Caco-2 (cell line): ENCODE measurements at regions of chr7 and their contacts with region 1.

Region 1: DNA sequence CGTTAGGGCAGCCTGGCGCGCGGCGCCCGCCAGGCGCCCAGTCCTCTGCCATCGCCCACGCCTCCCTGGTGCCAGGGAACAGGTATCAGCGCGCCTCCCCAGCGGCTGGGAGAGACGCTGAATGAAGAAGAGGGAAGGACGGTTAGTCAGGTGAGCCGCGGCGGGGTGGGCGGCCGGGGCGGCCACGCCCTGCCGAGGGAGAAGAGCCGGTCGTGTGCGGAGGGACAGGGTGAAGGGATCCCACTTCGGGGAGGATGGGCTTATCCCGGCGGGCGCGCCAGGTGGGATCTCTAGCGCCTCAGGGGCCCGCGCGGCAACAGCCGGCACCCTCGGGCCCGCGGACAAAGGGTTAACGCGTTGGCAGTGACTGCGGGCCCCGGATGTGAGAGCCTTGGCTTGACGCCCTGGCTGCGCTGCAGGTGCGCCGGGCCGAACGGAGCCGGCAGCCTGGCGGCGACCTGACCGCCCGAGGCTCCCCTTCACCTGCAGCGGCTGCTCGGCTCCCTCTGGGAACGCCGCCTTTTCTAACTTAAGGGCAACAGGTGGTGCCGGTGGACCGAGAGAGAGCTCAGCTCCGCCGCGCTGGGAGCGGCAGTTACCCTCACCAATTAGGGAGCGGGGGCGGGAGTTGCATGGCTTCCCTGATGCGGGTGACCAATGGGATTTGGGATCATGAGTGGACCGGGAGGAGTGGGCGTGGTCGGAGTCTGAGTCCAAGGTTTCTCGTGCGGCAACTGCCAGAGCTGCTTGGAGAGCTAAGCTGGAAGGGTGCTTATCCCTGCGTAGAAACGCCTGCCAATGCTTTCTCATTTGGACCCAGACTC is at the start of gene ARL4A:
- DNase-seq: peak; percentile 99
- H3K4me3 ChIP-seq: peak within 1 kb of the TSS; percentile 83
- H3K4me3 Mint-ChIP-seq: peak within 1 kb of the TSS; percentile 93
- H3K27ac Mint-ChIP-seq: peak within 1 kb of the TSS; percentile 89
- H3K4me1 ChIP-seq: peaks cover 7% of the 10 kb centered on the region
- H3K4me1 Mint-ChIP-seq: peaks cover 19% of the 10 kb centered on the region
- H3K27me3 ChIP-seq: no peaks in the 10 kb centered on the region
- H3K27me3 Mint-ChIP-seq: no peaks in the 10 kb centered on the region
- CTCF ChIP-seq: peak in 1 of 2 experiments; percentile 61
- total RNA-seq, gene ARL4A: 40.6 and 42.5 TPM in 2 replicates

Region 2: DNA sequence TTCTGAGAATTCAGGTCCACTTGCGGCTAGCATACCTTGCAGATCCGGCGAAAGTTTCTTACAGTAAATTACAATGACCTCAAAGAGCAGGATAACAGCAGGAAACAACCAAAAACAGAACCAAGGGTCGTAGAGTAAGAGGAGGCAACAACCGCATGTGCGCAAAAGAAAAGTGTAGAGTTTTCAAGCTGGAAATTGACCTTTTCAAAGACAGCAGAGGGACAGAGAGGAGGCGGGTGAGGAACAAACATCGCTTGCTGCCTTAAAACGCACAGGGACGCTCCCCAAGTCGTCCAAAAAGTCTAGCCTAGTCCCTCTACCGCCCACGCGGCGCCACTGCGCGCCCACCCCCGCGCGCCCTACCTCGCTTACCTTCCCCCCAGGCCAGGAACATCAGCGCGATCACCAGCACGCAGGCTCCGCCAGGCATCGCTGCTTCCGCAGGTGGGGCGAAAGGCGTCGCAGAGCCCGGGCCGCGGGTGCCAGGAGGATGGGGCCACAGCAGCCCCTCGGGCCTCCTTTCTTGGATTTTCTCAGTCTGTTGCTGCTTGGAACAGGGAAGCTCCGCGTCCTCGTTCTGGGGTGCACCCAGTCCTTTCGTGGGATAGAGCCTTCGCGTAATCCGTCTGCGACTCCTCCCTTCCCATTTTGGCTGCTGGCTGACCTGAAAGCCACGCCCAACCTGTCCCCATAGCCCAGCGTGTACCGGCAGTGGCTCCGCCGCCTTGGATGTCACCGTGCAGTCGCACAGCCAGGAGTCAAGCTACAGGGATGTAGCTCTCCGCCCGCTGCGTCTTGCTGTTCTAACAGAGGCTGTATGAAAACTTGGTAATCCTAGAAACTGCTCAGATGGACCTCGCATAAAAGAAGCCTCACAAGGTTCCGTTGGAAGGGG is 283.6 kb before region 1 on chr7 and contains the start of gene VWDE:
- CTCF ChIA-PET with region 1: no interaction called
- POLR2A ChIA-PET with region 1: no interaction called
- intact Hi-C with region 1: no loop called
- DNase-seq: peak; percentile 69 to 74
- H3K4me3 ChIP-seq: peak within 1 kb of the TSS; percentile 48
- H3K4me3 Mint-ChIP-seq: peak within 1 kb of the TSS; percentile 87
- H3K27ac Mint-ChIP-seq: peak within 1 kb of the TSS; percentile 81
- H3K4me1 ChIP-seq: no peaks in the 10 kb centered on the region
- H3K4me1 Mint-ChIP-seq: no peaks in the 10 kb centered on the region
- H3K27me3 ChIP-seq: peaks cover 1% of the 10 kb centered on the region; the same call in 1 of the 2 replicates
- H3K27me3 Mint-ChIP-seq: peaks cover 24% of the 10 kb centered on the region
- CTCF ChIP-seq: no peak
- total RNA-seq, gene VWDE: 0.46 and 0.70 TPM in 2 replicates

Region 3: GRCh38 chr7:12643644-12644043 is 43.5 kb before region 1 on chr7:
- CTCF ChIA-PET with region 1: interaction called, 6 read pairs
- POLR2A ChIA-PET with region 1: no interaction called
- intact Hi-C with region 1: loop called (anchors 1 kb)
- DNase-seq: no peak
- H3K4me3 ChIP-seq: no peak overlapping the region
- H3K4me3 Mint-ChIP-seq: no peak overlapping the region
- H3K27ac Mint-ChIP-seq: no peak overlapping the region
- H3K4me1 ChIP-seq: peaks cover 23% of the 10 kb centered on the region
- H3K4me1 Mint-ChIP-seq: peaks cover 8% of the 10 kb centered on the region
- H3K27me3 ChIP-seq: no peaks in the 10 kb centered on the region
- H3K27me3 Mint-ChIP-seq: no peaks in the 10 kb centered on the region
- CTCF ChIP-seq: no peak

Region 4: GRCh38 chr7:12703881-12704280 is 16.8 kb after region 1 on chr7:
- CTCF ChIA-PET with region 1: no interaction called
- POLR2A ChIA-PET with region 1: no interaction called
- intact Hi-C with region 1: no loop called
- DNase-seq: no peak
- H3K4me3 ChIP-seq: no peak overlapping the region
- H3K4me3 Mint-ChIP-seq: no peak overlapping the region
- H3K27ac Mint-ChIP-seq: no peak overlapping the region
- H3K4me1 ChIP-seq: peaks cover 7% of the 10 kb centered on the region; the same call in 1 of the 2 replicates
- H3K4me1 Mint-ChIP-seq: peaks cover 7% of the 10 kb centered on the region
- H3K27me3 ChIP-seq: no peaks in the 10 kb centered on the region
- H3K27me3 Mint-ChIP-seq: no peaks in the 10 kb centered on the region
- CTCF ChIP-seq: no peak

Region 5: DNA sequence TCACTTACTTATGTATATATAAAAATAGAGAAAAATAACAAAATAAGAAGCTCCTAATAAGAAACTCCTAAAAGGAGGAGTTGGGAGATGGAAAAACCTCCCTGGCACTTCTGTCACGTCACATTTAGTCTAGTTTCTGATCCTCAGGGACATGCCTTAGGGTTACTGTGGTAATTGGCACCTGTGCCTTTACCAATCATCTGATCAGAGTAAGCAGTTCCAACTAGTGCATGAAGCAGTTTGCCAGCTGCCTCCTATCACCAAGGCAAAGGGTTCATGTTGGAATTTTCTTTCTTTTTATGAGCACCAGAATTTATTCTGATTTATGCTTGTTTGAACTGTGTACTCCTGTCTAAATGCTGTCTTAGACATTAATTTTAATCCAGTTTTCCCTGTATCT is 50.3 kb after region 1 on chr7:
- CTCF ChIA-PET with region 1: no interaction called
- POLR2A ChIA-PET with region 1: no interaction called
- intact Hi-C with region 1: loop called (anchors 5 kb)
- DNase-seq: no peak
- H3K4me3 ChIP-seq: no peak overlapping the region
- H3K4me3 Mint-ChIP-seq: no peak overlapping the region
- H3K27ac Mint-ChIP-seq: no peak overlapping the region
- H3K4me1 ChIP-seq: peaks cover 14% of the 10 kb centered on the region
- H3K4me1 Mint-ChIP-seq: no peaks in the 10 kb centered on the region
- H3K27me3 ChIP-seq: no peaks in the 10 kb centered on the region
- H3K27me3 Mint-ChIP-seq: no peaks in the 10 kb centered on the region
- CTCF ChIP-seq: no peak

Region 6: GRCh38 chr7:12929476-12930140 is 242.5 kb after region 1 on chr7:
- CTCF ChIA-PET with region 1: interaction called, 3 read pairs
- POLR2A ChIA-PET with region 1: interaction called, 5 read pairs
- intact Hi-C with region 1: loop called (anchors 1 kb)
- DNase-seq: no peak
- H3K4me3 ChIP-seq: no peak overlapping the region
- H3K4me3 Mint-ChIP-seq: peak overlapping the region; percentile 90
- H3K27ac Mint-ChIP-seq: peak overlapping the region; percentile 85
- H3K4me1 ChIP-seq: peaks cover 42% of the 10 kb centered on the region
- H3K4me1 Mint-ChIP-seq: peaks cover 37% of the 10 kb centered on the region
- H3K27me3 ChIP-seq: no peaks in the 10 kb centered on the region
- H3K27me3 Mint-ChIP-seq: no peaks in the 10 kb centered on the region
- CTCF ChIP-seq: no peak

Region 7: GRCh38 chr7:13032576-13032975 is 345.5 kb after region 1 on chr7:
- CTCF ChIA-PET with region 1: no interaction called
- POLR2A ChIA-PET with region 1: interaction called, 3 read pairs
- intact Hi-C with region 1: loop called (anchors 1 kb)
- DNase-seq: peak; percentile 33 to 42
- H3K4me3 ChIP-seq: no peak overlapping the region
- H3K4me3 Mint-ChIP-seq: no peak overlapping the region
- H3K27ac Mint-ChIP-seq: peak overlapping the region; percentile 72
- H3K4me1 ChIP-seq: peaks cover 25% of the 10 kb centered on the region
- H3K4me1 Mint-ChIP-seq: peaks cover 32% of the 10 kb centered on the region
- H3K27me3 ChIP-seq: no peaks in the 10 kb centered on the region
- H3K27me3 Mint-ChIP-seq: no peaks in the 10 kb centered on the region
- CTCF ChIP-seq: no peak

Region 8: DNA sequence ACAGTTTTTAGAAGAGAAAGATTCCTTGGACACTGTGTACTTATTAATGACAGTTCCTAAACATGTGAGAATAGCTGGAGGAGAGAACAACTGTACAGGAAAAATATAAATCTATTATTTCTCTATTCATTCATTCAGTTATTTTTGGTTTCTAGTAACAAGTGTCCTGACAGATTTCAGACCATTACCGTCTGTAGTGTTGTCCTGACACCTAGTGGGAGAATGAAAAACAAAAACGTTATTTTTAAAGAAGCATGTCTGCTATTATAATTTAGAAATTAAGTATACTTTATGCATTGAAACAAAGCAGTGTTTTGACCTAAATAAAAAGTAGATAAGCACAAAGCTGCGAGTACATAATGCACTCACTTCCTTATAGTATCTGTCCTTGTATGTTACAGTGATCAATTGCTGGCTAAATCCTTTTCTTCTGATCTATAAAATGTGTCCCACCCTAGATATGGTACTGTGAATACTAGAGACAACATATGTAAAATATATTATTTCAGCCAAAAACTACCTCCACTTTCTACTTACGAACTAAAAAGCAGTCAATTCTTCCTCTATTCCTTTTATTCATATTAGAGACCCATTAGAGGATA is 575.9 kb after region 1 on chr7:
- CTCF ChIA-PET with region 1: interaction called, 5 read pairs
- POLR2A ChIA-PET with region 1: no interaction called
- intact Hi-C with region 1: loop called (anchors 1 kb)
- DNase-seq: peak in 1 of 2 experiments; percentile 40
- H3K4me3 ChIP-seq: no peak overlapping the region
- H3K4me3 Mint-ChIP-seq: no peak overlapping the region
- H3K27ac Mint-ChIP-seq: no peak overlapping the region
- H3K4me1 ChIP-seq: no peaks in the 10 kb centered on the region
- H3K4me1 Mint-ChIP-seq: no peaks in the 10 kb centered on the region
- H3K27me3 ChIP-seq: no peaks in the 10 kb centered on the region
- H3K27me3 Mint-ChIP-seq: no peaks in the 10 kb centered on the region
- CTCF ChIP-seq: peak; percentile 43 to 54